ENCODE measurements at regions of chr6 and their contacts with region 1.

Region 1: GRCh38 chr6:21946298-21946783 is 350.5 kb downstream of the PRL start:
- DNase-seq: peak; percentile 54
- H3K4me3 Mint-ChIP-seq: no peak overlapping the region
- H3K27ac Mint-ChIP-seq: peak overlapping the region; percentile 79
- H3K4me1 Mint-ChIP-seq: peaks cover 85% of the 10 kb centered on the region
- H3K27me3 Mint-ChIP-seq: no peaks in the 10 kb centered on the region
- CTCF ChIP-seq: no peak

Region 2: GRCh38 chr6:20564269-20564668 is 1382.1 kb before region 1 on chr6:
- CTCF ChIA-PET with region 1: no interaction called
- intact Hi-C with region 1: loop called (anchors 10 kb)
- DNase-seq: no peak
- H3K4me3 Mint-ChIP-seq: no peak overlapping the region
- H3K27ac Mint-ChIP-seq: no peak overlapping the region
- H3K4me1 Mint-ChIP-seq: peaks cover 9% of the 10 kb centered on the region
- H3K27me3 Mint-ChIP-seq: no peaks in the 10 kb centered on the region
- CTCF ChIP-seq: peak; percentile 69

Region 3: GRCh38 chr6:21987501-21987957 is 41.2 kb after region 1 on chr6:
- CTCF ChIA-PET with region 1: interaction called, 4 read pairs
- intact Hi-C with region 1: loop called (anchors 2 kb)
- DNase-seq: peak; percentile 87
- H3K4me3 Mint-ChIP-seq: peak overlapping the region; percentile 28
- H3K27ac Mint-ChIP-seq: peak overlapping the region; percentile 72
- H3K4me1 Mint-ChIP-seq: peaks cover 37% of the 10 kb centered on the region
- H3K27me3 Mint-ChIP-seq: no peaks in the 10 kb centered on the region
- CTCF ChIP-seq: no peak

Region 4: DNA sequence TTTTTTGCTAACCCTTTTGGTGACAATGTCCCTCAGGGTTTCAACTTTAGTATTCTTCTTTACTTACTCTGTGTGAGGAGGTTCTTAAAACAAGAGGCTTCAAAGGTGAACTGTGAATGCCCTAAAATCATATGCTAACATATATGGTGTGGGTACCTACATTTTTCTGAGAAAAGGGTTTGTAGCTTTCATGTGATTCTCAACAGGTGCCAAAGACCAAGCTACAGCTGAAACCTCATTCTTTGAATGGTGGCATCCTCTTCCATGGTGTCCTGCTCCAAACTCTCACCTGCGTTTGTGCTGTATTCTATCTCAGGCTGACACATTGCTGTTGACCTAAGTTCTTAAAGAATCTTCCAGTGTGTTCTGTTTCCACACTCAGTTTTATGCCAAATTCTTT is 173.2 kb after region 1 on chr6:
- CTCF ChIA-PET with region 1: no interaction called
- intact Hi-C with region 1: no loop called
- DNase-seq: no peak
- H3K4me3 Mint-ChIP-seq: no peak overlapping the region
- H3K27ac Mint-ChIP-seq: no peak overlapping the region
- H3K4me1 Mint-ChIP-seq: no peaks in the 10 kb centered on the region
- H3K27me3 Mint-ChIP-seq: no peaks in the 10 kb centered on the region
- CTCF ChIP-seq: no peak

Region 5: DNA sequence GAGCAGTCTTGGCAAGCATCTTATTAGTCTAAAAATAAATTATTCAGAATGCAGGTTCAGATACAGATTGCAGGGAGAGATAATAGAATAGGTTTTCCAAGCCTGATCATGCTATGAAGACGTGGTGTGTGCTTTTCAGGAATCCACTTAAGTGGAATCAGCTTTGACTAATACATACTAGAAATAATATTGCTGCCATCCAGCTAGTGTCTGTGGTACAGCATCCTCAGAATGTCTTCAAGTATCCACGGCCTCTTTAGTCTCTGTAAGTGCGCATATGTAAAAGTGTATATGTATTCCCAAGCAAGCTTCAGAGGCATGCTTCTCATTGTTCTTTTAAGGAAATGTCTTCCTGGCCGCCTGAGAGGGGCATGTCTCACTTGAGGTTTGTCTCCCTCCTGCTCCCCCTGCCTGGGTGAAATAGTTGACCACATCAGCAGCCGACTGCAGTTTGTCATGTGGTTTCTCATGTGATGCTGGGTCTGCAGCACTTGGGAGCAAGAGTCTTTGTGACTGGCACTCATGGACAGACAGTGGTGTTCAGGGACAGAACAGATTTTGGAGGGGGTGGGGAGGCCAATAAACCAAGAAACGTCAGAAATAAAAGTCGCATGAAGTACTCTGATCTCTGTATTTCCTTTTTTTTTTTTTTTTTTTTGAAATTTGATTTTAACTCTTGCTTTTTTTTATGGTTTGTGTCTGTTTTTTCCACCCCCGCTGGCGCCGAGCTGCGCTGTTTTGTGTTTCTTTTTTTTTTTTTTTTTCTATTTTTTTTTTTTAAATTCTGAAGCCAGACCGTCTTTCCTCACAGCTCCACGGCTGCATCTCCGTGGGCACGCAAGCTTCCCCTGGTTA is 199.7 kb after region 1 on chr6:
- CTCF ChIA-PET with region 1: no interaction called
- intact Hi-C with region 1: loop called (anchors 5 kb)
- DNase-seq: no peak
- H3K4me3 Mint-ChIP-seq: no peak overlapping the region
- H3K27ac Mint-ChIP-seq: no peak overlapping the region
- H3K4me1 Mint-ChIP-seq: peaks cover 20% of the 10 kb centered on the region
- H3K27me3 Mint-ChIP-seq: no peaks in the 10 kb centered on the region
- CTCF ChIP-seq: no peak

Region 6: GRCh38 chr6:22221630-22222029 is 275.3 kb after region 1 on chr6:
- CTCF ChIA-PET with region 1: no interaction called
- intact Hi-C with region 1: loop called (anchors 5 kb)
- DNase-seq: peak; percentile 79
- H3K4me3 Mint-ChIP-seq: peak overlapping the region; percentile 34
- H3K27ac Mint-ChIP-seq: peak overlapping the region; percentile 53
- H3K4me1 Mint-ChIP-seq: peaks cover 13% of the 10 kb centered on the region
- H3K27me3 Mint-ChIP-seq: no peaks in the 10 kb centered on the region
- CTCF ChIP-seq: no peak

Region 7: DNA sequence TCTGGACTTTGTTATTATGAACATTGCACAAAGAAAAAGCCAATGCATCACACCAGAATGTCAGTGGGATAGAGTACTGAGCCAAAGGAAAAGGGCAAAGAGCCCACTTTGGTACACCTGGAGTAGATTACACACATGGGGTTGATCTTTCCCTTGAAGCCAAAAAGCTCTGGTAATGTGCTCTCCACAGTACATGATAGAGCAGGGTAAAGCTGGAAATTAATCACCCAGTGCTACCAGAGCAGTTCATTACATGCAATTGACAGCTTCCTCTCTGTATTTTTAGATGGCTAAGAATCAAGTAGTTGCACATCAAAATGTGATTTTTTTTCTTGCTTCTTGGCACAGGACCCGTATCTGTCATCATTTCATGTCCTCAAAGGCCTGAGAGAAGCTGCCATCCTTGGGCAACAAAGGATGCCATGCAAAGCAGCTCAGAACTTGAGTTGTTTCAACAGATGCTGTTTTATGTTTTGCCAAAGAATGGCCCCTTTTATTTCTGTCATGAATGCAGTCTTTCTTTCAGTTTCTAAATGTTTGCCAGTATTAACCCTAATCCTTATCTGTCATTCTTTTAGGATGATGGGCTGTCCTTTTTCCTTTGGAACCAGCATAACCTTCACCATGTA is 711.1 kb after region 1 on chr6:
- CTCF ChIA-PET with region 1: no interaction called
- intact Hi-C with region 1: loop called (anchors 10 kb)
- DNase-seq: peak; percentile 28
- H3K4me3 Mint-ChIP-seq: no peak overlapping the region
- H3K27ac Mint-ChIP-seq: peak overlapping the region; percentile 25
- H3K4me1 Mint-ChIP-seq: peaks cover 50% of the 10 kb centered on the region
- H3K27me3 Mint-ChIP-seq: no peaks in the 10 kb centered on the region
- CTCF ChIP-seq: no peak